SK-N-SH (cell line): ENCODE measurements at regions of chr17 and their contacts with region 1.

Region 1: DNA sequence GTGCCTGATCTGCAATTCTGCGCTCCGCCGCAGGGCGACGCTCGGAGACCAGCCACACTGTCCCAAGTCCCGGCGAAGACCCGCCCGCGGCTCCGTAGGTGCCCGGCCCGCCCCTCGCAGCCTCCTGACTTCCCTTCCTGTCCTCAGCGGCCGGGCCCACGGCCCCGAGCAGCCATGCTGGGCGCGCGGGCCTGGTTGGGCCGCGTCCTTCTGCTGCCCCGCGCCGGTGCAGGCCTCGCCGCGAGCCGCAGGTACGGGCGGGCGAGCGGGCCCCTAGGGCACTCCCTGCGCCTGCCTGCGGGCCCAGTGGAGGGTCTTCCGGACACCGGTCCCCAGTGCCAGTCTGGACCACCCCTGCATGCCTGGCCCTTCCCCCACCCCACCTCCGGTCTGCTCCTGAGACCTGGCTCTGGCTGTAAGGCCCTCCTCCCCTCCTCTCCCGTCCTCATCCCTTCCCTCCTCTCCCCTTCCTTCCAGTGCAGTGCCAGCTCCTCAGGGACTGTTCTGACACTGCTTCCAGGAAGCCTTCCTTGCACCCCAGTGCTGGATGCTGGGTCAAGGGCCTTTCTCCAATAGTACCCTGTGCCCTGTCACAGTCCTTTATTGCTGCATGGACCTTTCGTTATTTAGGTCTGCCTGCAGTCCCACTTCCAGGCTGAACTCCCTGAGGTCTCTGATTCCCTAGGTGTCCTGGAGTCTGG is at the start of gene SPATA20:
- DNase-seq: peak; percentile 99
- H3K4me3 ChIP-seq: peak within 1 kb of the TSS; percentile 70 to 76
- H3K27ac ChIP-seq: peak within 1 kb of the TSS in 1 of 2 experiments; percentile 78; a peak in 2 of 4 replicates
- H3K4me1 ChIP-seq: peaks cover 7 to 30% of the 10 kb centered on the region in 2 experiments; a peak in 3 of 4 replicates
- H3K27me3 ChIP-seq: no peaks in the 10 kb centered on the region
- CTCF ChIP-seq: peak; percentile 99
- EP300 ChIP-seq: 0 out of 4 replicates have a peak, but pooled peaks of 1 of the 2 experiments have one; percentile 22
- RAD21 ChIP-seq: peak; percentile 100
- polyA plus RNA-seq, gene SPATA20: 92.0 and 106 TPM in 2 replicates

Region 2: DNA sequence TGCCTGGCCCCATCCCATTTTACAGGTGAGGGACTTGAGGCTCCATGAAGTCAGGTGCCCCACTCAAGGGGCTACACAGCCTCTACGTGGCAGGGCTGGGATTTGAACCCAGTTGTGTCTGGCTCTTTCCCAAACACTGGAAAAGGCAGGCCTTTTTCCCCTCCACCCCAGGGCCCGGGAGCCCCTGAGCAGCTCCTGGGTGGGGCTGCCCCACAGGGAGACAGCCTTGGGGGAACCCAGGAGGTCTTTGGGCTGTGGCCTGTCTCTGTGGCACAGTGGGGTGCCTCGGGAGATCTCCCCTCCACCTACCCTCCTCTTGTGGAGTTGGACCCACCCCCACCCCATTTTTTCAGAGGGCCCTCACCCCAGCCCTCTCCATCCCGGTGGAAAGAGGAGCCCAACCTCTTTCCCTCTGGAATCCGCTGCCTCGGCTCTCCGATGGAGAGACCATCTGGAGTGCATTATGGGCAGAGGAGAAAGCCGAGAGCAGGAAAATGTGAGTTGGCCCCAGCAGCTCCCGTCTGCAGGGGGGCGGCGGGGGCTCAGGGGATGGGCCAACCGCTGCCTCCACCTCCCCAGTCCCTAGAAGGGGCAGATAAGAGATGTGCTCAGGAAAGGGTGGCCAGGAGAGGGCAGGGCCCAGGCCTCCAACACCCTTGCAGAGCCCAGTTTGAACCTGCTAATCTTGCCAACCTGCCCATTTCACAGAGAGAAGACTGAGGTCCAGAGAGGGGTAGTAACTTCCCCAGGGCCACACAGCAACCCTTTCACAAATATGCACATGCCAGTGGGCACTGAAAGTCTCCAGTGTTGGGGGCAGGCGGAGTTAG is 288.3 kb before region 1 on chr17:
- CTCF ChIA-PET with region 1: no interaction called
- POLR2A ChIA-PET with region 1: no interaction called
- DNase-seq: peak; percentile 85
- H3K4me3 ChIP-seq: no peak overlapping the region
- H3K27ac ChIP-seq: peak overlapping the region; percentile 3 to 44; a peak in 3 of 4 replicates
- H3K4me1 ChIP-seq: peaks cover 9 to 23% of the 10 kb centered on the region in 2 experiments; a peak in 3 of 4 replicates
- H3K27me3 ChIP-seq: no peaks in the 10 kb centered on the region
- CTCF ChIP-seq: 0 out of 2 replicates have a peak, but pooled peaks have one; percentile 10
- EP300 ChIP-seq: peak in 1 of 2 experiments; percentile 70; a peak in 1 of 4 replicates
- RAD21 ChIP-seq: no peak

Region 3: DNA sequence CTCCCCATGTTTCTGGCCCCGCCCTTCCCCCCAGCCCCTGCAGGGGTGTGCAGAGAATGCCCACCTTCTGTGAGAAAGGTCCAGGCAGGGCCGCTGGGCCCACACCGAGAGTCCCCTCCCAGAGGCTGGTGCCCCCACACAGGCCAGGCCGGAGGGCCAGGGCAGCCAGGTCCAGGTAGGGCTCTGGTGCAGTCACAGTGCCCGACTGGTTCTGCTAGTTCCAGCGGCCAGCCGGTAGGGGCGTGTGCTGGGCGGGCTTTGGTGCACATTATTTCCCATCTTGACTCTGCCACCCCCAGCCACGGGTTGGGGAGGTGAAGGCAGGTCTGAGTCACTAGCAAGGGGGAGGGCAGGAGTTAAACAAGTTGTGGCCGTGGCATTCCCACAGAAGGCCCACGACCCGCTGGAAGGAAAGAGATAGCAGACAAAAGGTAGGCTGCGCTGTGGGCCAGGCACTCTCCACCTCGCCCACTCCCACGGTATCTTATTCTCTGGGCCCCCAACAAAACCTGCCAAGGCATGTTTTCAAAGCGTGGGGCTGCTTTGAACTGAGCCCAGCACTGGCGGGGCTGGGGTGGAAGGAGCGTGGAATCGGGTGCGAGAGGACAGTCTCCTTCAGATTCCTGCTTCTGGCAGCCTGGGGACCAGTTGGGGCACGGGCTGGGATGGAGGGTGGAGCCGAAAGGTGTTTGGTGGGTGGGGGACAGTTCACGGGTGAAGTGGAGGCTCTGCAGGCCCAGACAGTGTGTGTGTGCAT is 12.8 kb before region 1 on chr17:
- CTCF ChIA-PET with region 1: interaction called, 11 read pairs
- POLR2A ChIA-PET with region 1: interaction called, 14 read pairs
- DNase-seq: peak; percentile 62
- H3K4me3 ChIP-seq: no peak overlapping the region
- H3K27ac ChIP-seq: no peak overlapping the region
- H3K4me1 ChIP-seq: peaks cover 7 to 30% of the 10 kb centered on the region in 2 experiments; a peak in 3 of 4 replicates
- H3K27me3 ChIP-seq: peaks cover 28% of the 10 kb centered on the region; the same call in 1 of the 2 replicates
- CTCF ChIP-seq: no peak
- EP300 ChIP-seq: no peak
- RAD21 ChIP-seq: no peak

Region 4: DNA sequence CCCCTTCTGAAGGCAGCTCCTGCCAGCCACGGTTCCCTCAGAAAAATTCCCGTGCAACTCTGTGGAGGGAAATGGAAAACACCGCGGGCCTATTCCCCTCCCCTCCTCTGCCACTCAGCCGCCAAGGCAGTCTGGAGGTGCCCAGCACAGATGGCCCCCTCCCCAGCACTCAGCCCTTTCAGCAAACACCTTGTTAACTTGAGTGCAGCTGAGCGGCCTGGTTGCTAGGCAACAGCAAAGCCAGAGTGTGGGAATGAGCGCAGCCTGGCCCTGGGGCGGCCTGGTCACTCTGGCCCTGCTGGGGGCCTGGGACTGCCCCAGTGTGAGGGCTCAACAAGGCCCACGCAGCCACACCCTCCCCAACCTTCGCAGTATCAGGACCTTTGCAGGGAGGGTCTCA is 46.1 kb after region 1 on chr17:
- CTCF ChIA-PET with region 1: interaction called, 22 read pairs
- POLR2A ChIA-PET with region 1: no interaction called
- DNase-seq: peak; percentile 97
- H3K4me3 ChIP-seq: no peak overlapping the region
- H3K27ac ChIP-seq: peak overlapping the region in 1 of 2 experiments; percentile 41; a peak in 2 of 4 replicates
- H3K4me1 ChIP-seq: peaks cover 0 to 45% of the 10 kb centered on the region in 2 experiments; a peak in 2 of 4 replicates
- H3K27me3 ChIP-seq: no peaks in the 10 kb centered on the region
- CTCF ChIP-seq: no peak
- EP300 ChIP-seq: peak in 1 of 2 experiments; percentile 20; a peak in 1 of 4 replicates
- RAD21 ChIP-seq: peak; percentile 5; the same call in 1 of the 2 replicates

Region 5: GRCh38 chr17:50638851-50639767 is 91.9 kb after region 1 on chr17:
- CTCF ChIA-PET with region 1: interaction called, 87 read pairs
- POLR2A ChIA-PET with region 1: interaction called, 3 read pairs
- DNase-seq: peak; percentile 81
- H3K4me3 ChIP-seq: peak overlapping the region; percentile 4 to 43; a peak in 3 of 4 replicates
- H3K27ac ChIP-seq: peak overlapping the region; percentile 88 to 97
- H3K4me1 ChIP-seq: peaks cover 41 to 60% of the 10 kb centered on the region in 2 experiments; a peak in 3 of 4 replicates
- H3K27me3 ChIP-seq: no peaks in the 10 kb centered on the region
- CTCF ChIP-seq: no peak
- EP300 ChIP-seq: peak; percentile 65 to 94
- RAD21 ChIP-seq: peak; percentile 12; the same call in 1 of the 2 replicates

Region 6: GRCh38 chr17:50681263-50682210 is 134.4 kb after region 1 on chr17:
- CTCF ChIA-PET with region 1: interaction called, 356 read pairs
- POLR2A ChIA-PET with region 1: interaction called, 4 read pairs
- DNase-seq: peak; percentile 94
- H3K4me3 ChIP-seq: no peak overlapping the region
- H3K27ac ChIP-seq: peak overlapping the region in 1 of 2 experiments; percentile 7; a peak in 1 of 4 replicates
- H3K4me1 ChIP-seq: peaks cover 11 to 14% of the 10 kb centered on the region in 2 experiments; a peak in 3 of 4 replicates
- H3K27me3 ChIP-seq: no peaks in the 10 kb centered on the region
- CTCF ChIP-seq: peak; percentile 88
- EP300 ChIP-seq: no peak; a peak in 1 of 4 replicates
- RAD21 ChIP-seq: peak; percentile 97

Region 7: GRCh38 chr17:50841949-50842354 is 294.8 kb after region 1 on chr17:
- CTCF ChIA-PET with region 1: interaction called, 20 read pairs
- POLR2A ChIA-PET with region 1: no interaction called
- DNase-seq: peak; percentile 97
- H3K4me3 ChIP-seq: no peak overlapping the region; a peak in 1 of 4 replicates
- H3K27ac ChIP-seq: no peak overlapping the region
- H3K4me1 ChIP-seq: peaks cover 3 to 5% of the 10 kb centered on the region in 2 experiments; a peak in 2 of 4 replicates
- H3K27me3 ChIP-seq: no peaks in the 10 kb centered on the region
- CTCF ChIP-seq: peak; percentile 94
- EP300 ChIP-seq: no peak
- RAD21 ChIP-seq: peak; percentile 93